Activated CD4-positive, alpha-beta memory T cell treated with anti-CD3 and anti-CD28 coated beads for 36 hours (primary cell): ENCODE measurements at regions of chr19 and their contacts with region 1.

Region 1: GRCh38 chr19:55632463-55632834 is 8.1 kb upstream of the ZNF784 start:
- DNase-seq: peak; percentile 88
- H3K4me3 Mint-ChIP-seq: no peak overlapping the region
- H3K27ac Mint-ChIP-seq: no peak overlapping the region
- H3K4me1 Mint-ChIP-seq: peaks cover 39% of the 10 kb centered on the region
- H3K27me3 Mint-ChIP-seq: no peaks in the 10 kb centered on the region

Region 2: GRCh38 chr19:55141696-55142095 is 490.8 kb before region 1 on chr19:
- CTCF ChIA-PET with region 1: interaction called, 19 read pairs
- POLR2A ChIA-PET with region 1: no interaction called
- intact Hi-C with region 1: no loop called
- DNase-seq: no peak
- H3K4me3 Mint-ChIP-seq: no peak overlapping the region
- H3K27ac Mint-ChIP-seq: no peak overlapping the region
- H3K4me1 Mint-ChIP-seq: peaks cover 3% of the 10 kb centered on the region
- H3K27me3 Mint-ChIP-seq: peaks cover 45% of the 10 kb centered on the region

Region 3: GRCh38 chr19:55432241-55432959 is 200.0 kb before region 1 on chr19:
- CTCF ChIA-PET with region 1: no interaction called
- POLR2A ChIA-PET with region 1: no interaction called
- intact Hi-C with region 1: no loop called
- DNase-seq: no peak
- H3K4me3 Mint-ChIP-seq: no peak overlapping the region
- H3K27ac Mint-ChIP-seq: no peak overlapping the region
- H3K4me1 Mint-ChIP-seq: no peaks in the 10 kb centered on the region
- H3K27me3 Mint-ChIP-seq: peaks cover 39% of the 10 kb centered on the region

Region 4: DNA sequence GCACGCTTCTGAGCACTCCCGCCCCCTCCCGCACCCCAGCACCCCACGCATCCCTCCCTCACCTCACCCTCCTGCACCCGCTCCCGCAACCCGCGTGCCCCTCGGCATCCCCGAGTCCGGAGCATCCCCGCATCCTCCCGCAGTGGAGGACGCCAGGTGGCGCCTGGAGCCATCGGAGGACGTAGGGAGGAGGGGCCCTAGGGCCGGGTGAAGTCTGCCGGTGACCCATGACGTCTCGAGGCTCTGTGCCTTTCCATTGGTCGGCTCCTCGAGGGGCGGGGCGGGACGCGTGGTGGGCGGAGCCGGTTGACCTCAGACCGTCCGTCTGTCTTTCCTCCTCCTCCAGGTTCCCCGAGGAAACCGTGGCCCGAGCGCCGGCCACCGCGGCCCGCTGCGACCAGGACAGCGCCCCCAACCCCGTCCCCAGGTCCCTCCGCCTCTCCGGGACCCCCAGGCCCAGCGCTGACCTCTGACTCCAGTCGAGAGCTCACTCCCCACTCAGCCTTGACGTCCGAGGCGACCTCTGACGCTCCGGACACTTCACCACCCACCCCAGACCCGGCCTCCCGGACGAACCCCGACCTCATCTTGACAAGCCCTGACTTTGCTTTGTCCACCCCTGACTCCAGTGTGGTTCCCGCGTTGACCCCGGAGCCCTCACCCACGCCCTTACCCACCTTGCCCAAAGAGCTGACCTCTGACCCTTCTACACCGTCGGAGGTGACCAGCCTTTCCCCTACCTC is 115.4 kb before region 1 on chr19:
- CTCF ChIA-PET with region 1: interaction called, 31 read pairs
- POLR2A ChIA-PET with region 1: no interaction called
- intact Hi-C with region 1: loop called (anchors 1 kb)
- DNase-seq: peak; percentile 93
- H3K4me3 Mint-ChIP-seq: peak overlapping the region; percentile 64
- H3K27ac Mint-ChIP-seq: no peak overlapping the region
- H3K4me1 Mint-ChIP-seq: peaks cover 3% of the 10 kb centered on the region
- H3K27me3 Mint-ChIP-seq: peaks cover 11% of the 10 kb centered on the region

Region 5: DNA sequence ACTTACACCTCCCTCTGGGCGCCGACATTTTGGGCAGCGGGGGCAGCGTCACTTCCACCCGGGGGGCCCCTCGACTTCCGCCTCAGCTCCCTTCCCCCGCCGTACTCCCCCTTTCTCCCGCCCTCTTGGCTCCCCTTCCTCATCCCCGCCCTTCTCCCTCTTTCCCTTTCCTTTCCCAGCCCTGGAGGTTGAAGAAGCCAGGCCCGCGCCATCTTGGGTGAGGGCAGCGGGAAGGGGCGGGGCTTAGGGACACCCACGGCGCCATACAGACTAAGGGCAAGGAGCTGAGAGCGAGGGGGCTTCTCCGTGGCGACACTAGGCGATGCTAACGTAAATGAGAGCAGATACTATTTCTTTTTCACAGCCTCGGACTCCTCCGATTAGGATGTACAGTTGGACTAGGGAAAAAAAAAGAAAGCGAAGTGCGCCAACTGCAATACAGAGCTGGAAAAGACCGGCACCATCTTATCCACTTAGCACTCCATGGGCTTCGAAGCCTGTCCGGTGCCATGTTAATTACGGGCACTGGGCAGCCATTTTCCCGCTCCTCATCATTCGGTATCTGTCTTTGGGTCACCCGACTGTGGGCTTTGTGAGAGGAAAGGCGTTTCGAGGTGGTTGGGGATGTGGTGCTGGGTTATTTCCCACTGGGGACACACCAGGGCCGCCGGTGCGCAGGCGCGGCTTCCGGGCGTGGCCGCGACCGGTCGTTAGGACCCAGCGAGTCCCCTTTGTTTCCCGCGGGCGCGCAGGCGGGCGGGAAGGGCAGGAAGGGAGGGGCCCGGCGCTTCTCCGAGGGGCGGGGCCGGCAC is 32.8 kb before region 1 on chr19 and contains the start of gene FIZ1:
- CTCF ChIA-PET with region 1: interaction called, 15 read pairs
- POLR2A ChIA-PET with region 1: interaction called, 5 read pairs
- intact Hi-C with region 1: no loop called
- DNase-seq: peak; percentile 98
- H3K4me3 Mint-ChIP-seq: peak within 1 kb of the TSS; percentile 91
- H3K27ac Mint-ChIP-seq: peak within 1 kb of the TSS; percentile 95
- H3K4me1 Mint-ChIP-seq: peaks cover 25% of the 10 kb centered on the region
- H3K27me3 Mint-ChIP-seq: no peaks in the 10 kb centered on the region
- total RNA-seq, gene FIZ1: 13.8 to 13.9 TPM

Region 6: DNA sequence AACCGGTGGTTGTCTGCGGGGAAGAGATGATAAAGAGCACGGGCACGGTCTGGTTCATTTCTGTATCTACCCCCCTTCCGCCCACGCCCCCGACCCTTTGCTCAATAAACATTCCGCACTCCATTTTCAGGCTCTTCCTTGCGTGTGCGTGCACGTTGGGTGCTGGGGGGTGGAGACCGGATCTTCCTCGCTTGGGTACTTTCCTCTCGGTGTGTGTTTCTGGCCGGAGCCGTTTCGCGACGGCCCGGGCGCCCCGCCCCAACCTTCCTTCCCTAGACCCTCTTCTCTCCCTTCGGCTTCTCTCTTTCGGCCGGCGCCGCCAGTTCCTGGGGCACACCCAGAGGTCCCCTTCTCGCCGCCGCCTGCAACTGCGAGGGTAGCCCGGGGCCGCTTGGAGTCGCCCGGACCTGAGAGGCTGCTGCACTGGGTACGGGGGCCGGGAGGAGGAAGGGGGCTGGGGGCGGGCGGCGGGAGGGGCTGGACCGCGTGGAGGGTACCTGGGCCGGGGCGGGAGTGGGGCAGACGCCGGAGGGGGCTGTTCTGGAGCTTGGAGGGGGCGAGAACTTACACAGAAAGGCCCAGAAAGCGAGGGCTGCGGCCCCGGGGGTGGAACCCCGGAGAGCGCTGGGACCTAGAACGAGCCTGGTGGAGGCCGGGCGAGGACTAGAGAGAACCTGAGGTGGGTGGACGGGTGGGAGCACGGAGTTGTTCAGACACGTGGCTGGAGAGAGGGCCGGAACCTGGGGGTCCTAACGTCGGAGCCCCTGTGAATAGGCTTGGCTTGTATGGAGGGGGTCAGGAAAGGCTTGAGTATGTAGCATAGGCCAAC is 11.1 kb after region 1 on chr19 and contains the start of gene ZNF581:
- CTCF ChIA-PET with region 1: interaction called, 28 read pairs
- POLR2A ChIA-PET with region 1: interaction called, 6 read pairs
- intact Hi-C with region 1: loop called (anchors 1 kb)
- DNase-seq: peak; percentile 90
- H3K4me3 Mint-ChIP-seq: peak within 1 kb of the TSS; percentile 85
- H3K27ac Mint-ChIP-seq: peak within 1 kb of the TSS; percentile 98
- H3K4me1 Mint-ChIP-seq: peaks cover 46% of the 10 kb centered on the region
- H3K27me3 Mint-ChIP-seq: no peaks in the 10 kb centered on the region
- total RNA-seq, gene ZNF581: 19.2 to 20.1 TPM

Region 7: DNA sequence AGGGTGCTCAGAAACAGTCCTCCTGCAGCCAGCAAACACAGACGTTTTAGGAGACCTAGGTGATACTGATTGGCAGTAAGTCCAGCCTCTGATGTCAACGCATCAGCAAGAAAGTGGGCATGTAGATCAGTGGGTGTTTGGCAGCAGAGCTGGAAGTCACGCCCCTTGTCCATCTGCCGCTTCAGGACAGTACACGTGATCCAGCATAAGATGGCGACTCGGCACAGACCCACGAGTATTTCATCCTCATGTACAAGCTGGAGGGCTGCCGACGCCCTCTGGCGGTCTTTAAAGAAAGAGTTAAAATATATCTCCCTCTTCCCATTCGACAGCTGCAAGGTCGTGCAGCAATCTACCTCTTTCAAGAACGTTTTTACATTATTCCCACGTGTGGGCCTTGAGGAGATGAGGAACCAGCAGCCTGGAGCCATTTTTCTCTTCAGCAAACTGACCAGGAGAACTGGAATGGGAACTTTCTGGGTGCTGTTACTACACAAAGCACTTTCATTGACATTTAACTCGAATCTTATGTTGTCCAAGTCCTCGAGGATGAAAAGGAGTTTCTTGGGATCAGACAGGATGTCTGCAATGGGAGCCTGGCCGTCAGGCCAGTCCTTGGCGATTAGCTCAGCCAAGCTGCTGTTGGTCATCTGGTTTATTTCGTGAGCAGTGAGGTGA is 177.1 kb after region 1 on chr19:
- CTCF ChIA-PET with region 1: interaction called, 22 read pairs
- POLR2A ChIA-PET with region 1: interaction called, 3 read pairs
- intact Hi-C with region 1: no loop called
- DNase-seq: peak; percentile 59
- H3K4me3 Mint-ChIP-seq: no peak overlapping the region
- H3K27ac Mint-ChIP-seq: no peak overlapping the region
- H3K4me1 Mint-ChIP-seq: peaks cover 6% of the 10 kb centered on the region
- H3K27me3 Mint-ChIP-seq: peaks cover under 1% of the 10 kb centered on the region